Mammary epithelial cell (primary cell): ENCODE measurements at regions of chr12 and their contacts with region 1.

Region 1: DNA sequence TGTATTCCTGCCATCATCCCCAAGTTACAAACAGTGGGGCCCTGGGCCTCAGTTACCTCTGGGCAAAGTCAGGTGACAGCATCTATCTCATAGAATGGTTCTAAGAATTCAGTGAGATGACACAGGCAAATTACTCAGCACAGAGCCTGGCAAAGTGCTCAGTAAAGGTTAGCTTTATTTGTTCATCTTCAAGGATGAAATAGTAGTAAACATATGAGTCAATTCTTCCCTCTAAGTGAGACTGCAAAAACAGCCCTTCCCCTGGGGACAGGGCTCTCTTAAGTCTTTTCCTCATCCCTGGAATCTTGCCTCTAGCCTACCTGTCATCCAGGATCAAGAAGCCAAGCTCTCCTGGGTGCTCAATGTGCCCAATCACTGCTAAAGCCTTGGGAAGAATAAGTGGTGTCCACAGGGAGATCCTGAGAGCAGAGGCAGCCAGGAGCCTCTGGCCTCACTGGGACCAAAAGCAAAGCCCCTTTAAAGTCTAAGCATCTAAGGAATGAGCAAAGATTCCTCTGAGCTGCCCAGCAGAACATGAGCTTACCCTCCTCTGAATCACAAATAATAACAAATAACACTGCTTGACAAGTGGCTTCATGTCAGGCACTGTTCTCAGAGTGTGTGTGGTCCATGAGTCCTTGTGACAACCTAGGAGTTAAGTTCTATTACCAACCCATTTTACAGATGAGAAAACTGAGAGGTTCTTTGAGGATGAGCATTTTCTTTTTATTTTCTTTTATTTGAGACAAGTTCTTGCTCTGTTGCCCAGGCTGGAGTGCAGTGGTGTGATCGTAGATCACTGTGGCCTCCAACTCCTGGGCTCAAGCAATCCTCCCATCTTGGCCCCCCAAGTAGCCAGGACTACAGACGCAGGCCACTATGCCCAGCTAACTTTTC is 12.1 kb downstream of the NUAK1 start:
- DNase-seq: peak; percentile 58
- H3K4me3 ChIP-seq: no peak overlapping the region
- H3K27ac ChIP-seq: no peak overlapping the region
- H3K4me1 ChIP-seq: peaks cover 11% of the 10 kb centered on the region
- H3K27me3 ChIP-seq: no peaks in the 10 kb centered on the region
- CTCF ChIP-seq: no peak

Region 2: DNA sequence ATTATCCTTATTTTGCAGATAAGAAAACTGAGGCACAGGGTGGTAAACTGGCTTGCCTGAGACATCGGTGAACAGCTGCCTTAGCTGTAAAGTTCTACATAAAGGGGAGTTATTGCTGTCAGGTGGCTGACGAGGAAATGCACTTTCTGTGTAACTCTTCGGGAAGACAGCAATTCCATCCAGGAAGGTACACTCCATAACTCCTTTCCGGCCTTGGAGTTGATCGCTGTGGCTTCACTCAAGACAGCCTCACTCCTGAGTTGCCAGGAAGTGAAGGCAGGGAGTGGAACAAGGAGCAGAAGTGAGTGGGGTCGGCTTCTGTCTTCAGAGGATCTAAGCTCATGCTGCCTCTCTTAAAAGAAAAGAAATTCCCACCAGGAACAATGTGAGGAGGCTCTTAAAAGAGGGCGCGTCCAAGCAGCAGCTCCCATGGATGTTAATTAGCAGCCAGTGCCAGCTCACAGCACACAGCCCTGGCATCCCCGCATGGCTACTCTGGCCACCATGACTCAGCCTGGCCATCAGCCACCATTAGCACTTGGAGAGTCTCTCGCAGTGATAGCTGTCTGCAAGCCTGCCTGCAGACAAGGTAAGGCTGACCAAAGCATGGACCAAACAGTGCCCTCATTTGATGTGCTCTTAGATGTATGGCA is 48.2 kb before region 1 on chr12:
- CTCF ChIA-PET with region 1: no interaction called
- dilution Hi-C with region 1: loop called (anchors 5 kb)
- in situ Hi-C with region 1: no loop called
- intact Hi-C with region 1: loop called (anchors 5 kb)
- DNase-seq: peak; percentile 73
- H3K4me3 ChIP-seq: no peak overlapping the region
- H3K27ac ChIP-seq: no peak overlapping the region
- H3K4me1 ChIP-seq: peaks cover 10% of the 10 kb centered on the region
- H3K27me3 ChIP-seq: no peaks in the 10 kb centered on the region
- CTCF ChIP-seq: no peak